ENCODE measurements at regions of chr2 and their contacts with region 1.

Region 1: DNA sequence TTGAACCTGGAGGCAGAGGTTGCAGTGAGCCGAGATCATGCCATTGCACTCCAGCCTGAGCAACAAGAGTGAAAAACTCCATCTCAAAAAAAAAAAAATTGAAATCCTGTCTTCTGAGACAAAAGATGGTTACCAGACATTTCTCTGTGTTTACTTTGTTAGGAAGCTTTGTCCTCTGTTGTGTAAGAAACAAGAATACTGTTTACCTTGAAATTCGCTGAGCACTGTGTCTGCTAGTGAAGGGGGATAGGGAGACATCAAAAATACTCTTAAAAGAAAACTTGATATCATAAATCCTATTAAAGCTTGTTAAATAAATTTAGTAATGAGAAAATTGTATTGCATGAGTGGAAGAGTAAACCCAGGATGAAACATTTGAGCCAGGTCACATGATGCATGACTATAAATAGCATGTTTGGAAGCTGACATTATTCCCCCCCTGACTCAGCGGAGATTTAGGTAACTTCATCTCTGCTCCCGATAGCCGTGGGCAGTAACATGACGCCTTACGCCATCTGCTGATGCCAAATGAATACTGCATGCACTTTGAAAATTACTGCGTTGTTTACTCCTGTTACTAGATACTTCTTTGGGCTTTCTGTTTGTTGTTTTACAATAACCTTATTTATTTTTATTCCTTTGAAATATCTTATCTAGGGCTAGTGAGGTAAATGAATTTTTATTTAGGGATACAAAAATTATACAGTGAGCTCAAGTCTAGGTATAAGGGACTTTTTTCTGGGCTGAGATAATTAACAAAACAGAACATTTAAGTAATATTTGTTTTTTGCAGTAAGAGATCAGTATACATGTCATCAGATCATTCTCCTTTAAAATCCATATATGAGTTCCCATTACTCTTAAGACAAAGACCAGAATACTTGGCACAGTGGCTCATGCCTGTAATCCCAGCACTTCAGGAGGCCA is 134.9 kb downstream of the MAP3K20 start:
- DNase-seq: peak; percentile 58
- H3K4me3 Mint-ChIP-seq: no peak overlapping the region
- H3K27ac Mint-ChIP-seq: no peak overlapping the region
- H3K4me1 Mint-ChIP-seq: no peaks in the 10 kb centered on the region
- H3K27me3 Mint-ChIP-seq: peaks cover 3% of the 10 kb centered on the region

Region 2: DNA sequence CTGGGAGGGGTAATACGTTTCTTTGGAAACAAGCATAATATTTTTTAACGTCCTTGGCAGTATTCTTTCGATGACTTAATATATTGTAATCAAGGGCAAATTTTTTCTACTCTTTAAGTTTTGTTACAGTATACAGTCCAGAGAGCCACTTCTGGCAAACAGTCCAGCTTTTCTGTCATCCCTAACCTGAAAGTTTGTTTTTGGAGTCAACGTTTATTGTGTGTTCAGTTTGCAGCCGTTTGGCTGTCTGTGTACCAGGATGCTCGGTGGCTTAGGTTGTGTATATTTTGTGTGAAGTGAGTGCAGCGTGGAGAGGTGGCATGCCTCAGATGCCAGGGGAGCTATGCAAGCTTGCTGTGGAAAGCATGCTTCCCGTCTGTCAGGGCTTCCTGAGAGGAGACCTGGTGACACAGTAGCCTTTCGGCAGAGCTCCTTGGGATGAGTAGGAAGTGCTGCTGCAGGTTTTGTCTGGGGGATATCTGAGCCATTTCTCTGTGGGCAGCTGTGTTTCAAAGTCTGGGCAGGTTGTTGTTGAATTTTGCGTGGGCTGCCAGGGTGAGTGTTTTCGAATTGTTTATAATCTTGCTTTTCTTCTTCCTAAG is 120.2 kb before region 1 on chr2:
- CTCF ChIA-PET with region 1: interaction called, 17 read pairs
- DNase-seq: no peak
- H3K4me3 Mint-ChIP-seq: no peak overlapping the region
- H3K27ac Mint-ChIP-seq: no peak overlapping the region
- H3K4me1 Mint-ChIP-seq: no peaks in the 10 kb centered on the region
- H3K27me3 Mint-ChIP-seq: peaks cover 8% of the 10 kb centered on the region

Region 3: DNA sequence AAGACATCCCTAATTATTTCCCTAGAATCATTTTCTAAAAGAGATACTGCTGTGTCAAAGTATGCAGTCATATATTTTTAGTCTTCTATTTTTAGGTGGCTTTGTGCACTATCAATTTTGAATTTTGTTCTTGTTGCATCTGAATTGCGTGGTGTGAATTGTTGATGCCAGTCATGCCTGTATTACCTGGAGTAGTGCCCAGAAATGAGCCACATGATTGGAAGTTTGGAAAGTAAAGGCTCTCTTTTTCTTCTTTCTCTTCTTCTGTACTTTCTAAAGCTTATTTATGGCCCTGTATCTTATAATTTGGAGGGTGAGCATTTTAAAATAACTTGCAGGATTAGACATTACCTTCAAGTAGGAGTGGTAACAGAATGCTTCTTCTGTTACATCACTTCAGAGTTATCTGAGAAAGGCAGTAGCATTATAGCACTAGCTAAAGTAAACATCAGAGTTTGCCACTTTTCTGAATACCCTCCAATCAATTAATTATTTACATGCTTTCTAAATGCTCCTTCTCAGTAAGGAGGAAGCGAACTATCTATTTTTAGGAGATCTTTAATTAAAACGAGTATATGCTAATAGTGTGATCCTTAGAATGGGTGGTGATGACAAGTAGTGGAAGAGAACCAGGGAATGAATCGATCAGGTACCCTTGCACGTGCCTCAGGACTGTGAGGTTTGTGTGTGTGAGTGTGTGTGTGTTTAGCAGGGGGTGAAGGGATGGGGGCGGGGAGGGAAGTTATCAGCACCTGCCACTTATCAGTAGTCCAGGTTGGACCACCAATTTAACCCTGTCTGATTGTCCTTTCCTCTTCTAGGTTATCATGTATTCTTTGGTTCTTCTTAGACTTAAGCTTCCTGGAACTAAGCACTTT is 22.4 kb before region 1 on chr2:
- CTCF ChIA-PET with region 1: no interaction called
- DNase-seq: no peak
- H3K4me3 Mint-ChIP-seq: no peak overlapping the region
- H3K27ac Mint-ChIP-seq: no peak overlapping the region
- H3K4me1 Mint-ChIP-seq: no peaks in the 10 kb centered on the region
- H3K27me3 Mint-ChIP-seq: no peaks in the 10 kb centered on the region

Region 4: GRCh38 chr2:173571021-173571882 is 360.7 kb after region 1 on chr2:
- CTCF ChIA-PET with region 1: no interaction called
- DNase-seq: no peak
- H3K4me3 Mint-ChIP-seq: no peak overlapping the region
- H3K27ac Mint-ChIP-seq: no peak overlapping the region
- H3K4me1 Mint-ChIP-seq: no peaks in the 10 kb centered on the region
- H3K27me3 Mint-ChIP-seq: peaks cover 9% of the 10 kb centered on the region